Activated B cell treated with CpG ODN at 0.5 μM for 24 hours (primary cell): ENCODE measurements at regions of chr17 and their contacts with region 1.

Region 1: GRCh38 chr17:19338031-19338990 is 24.2 kb downstream of the B9D1 start:
- DNase-seq: peak; percentile 65
- ATAC-seq: peak; percentile 99
- H3K4me3 Mint-ChIP-seq: no peak overlapping the region
- H3K27ac Mint-ChIP-seq: no peak overlapping the region
- H3K4me1 Mint-ChIP-seq: no peaks in the 10 kb centered on the region
- H3K27me3 Mint-ChIP-seq: no peaks in the 10 kb centered on the region
- CTCF ChIP-seq: peak; percentile 28

Region 2: GRCh38 chr17:19284005-19284959 is 54.0 kb before region 1 on chr17:
- CTCF ChIA-PET with region 1: interaction called, 3 read pairs
- POLR2A ChIA-PET with region 1: no interaction called
- intact Hi-C with region 1: loop called (anchors 10 kb)
- DNase-seq: no peak
- ATAC-seq: peak; percentile 83
- H3K4me3 Mint-ChIP-seq: peak overlapping the region; percentile 39
- H3K27ac Mint-ChIP-seq: peak overlapping the region; percentile 37
- H3K4me1 Mint-ChIP-seq: peaks cover 27% of the 10 kb centered on the region
- H3K27me3 Mint-ChIP-seq: peaks cover 14% of the 10 kb centered on the region
- CTCF ChIP-seq: no peak

Region 3: GRCh38 chr17:19317359-19318095 is 20.8 kb before region 1 on chr17:
- CTCF ChIA-PET with region 1: interaction called, 3 read pairs
- POLR2A ChIA-PET with region 1: no interaction called
- intact Hi-C with region 1: loop called (anchors 1 kb)
- DNase-seq: no peak
- ATAC-seq: peak; percentile 96
- H3K4me3 Mint-ChIP-seq: no peak overlapping the region
- H3K27ac Mint-ChIP-seq: no peak overlapping the region
- H3K4me1 Mint-ChIP-seq: peaks cover 6% of the 10 kb centered on the region
- H3K27me3 Mint-ChIP-seq: peaks cover 2% of the 10 kb centered on the region
- CTCF ChIP-seq: no peak

Region 4: DNA sequence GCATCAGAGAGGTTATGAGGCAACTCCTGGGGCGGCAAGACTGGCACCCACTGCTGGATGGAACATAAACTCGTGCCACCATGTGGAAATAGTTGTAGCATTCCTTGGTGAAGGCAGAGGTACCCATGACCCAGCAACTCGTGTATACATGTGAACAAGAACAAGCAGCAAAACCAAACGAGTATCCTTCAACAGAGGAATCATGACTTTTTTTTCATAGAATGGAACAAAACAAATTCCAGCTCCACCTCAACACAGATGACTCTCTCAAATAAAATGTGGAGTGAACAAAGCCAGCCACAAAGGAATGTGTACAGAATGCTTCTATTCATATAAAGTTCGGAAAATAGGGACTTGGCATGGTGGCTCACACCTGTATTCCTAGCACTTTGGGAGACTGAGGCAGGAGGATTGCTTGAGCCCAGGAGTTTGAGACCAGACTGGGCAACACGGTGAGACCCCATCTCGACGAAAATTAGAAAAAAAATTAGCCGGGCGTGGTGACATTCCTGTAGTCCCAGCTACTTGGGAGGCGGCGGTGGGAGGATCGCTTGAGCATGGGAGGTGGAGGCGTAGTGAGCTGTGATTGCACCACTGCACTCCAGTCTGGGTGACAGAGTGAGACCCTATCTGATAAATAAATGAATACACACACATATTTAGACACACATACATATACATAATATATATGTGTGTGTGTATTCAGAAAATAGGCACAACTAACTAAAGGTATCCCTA is 11.1 kb before region 1 on chr17:
- CTCF ChIA-PET with region 1: interaction called, 11 read pairs
- POLR2A ChIA-PET with region 1: no interaction called
- intact Hi-C with region 1: no loop called
- DNase-seq: no peak
- ATAC-seq: no peak
- H3K4me3 Mint-ChIP-seq: no peak overlapping the region
- H3K27ac Mint-ChIP-seq: no peak overlapping the region
- H3K4me1 Mint-ChIP-seq: no peaks in the 10 kb centered on the region
- H3K27me3 Mint-ChIP-seq: no peaks in the 10 kb centered on the region
- CTCF ChIP-seq: no peak

Region 5: DNA sequence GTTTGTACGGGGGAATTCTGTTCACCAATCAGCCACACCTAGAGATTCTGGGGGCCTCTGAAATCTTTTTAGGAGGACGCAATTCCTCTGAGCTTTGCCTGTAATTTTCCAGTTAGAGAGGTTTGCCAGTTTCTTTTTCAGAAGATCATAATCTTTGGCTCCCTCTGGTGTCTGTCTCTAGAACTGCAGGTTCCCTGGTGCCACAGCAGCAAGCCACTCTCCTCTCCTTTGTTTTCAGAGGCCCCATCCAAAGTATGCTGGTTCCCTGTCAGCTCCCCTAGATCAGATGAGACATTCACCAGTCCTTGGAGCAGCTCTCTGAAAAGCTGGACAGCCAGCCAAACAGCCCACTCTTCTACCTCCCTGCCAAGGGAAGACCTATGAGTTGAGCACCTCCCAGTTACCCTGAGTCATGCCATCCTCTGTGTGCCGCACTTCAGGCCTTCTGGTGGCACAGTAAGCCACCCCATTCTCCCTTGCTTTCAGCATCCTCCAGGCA is 108.8 kb after region 1 on chr17:
- CTCF ChIA-PET with region 1: interaction called, 13 read pairs
- POLR2A ChIA-PET with region 1: no interaction called
- intact Hi-C with region 1: loop called (anchors 1 kb)
- DNase-seq: no peak
- ATAC-seq: peak; percentile 65
- H3K4me3 Mint-ChIP-seq: no peak overlapping the region
- H3K27ac Mint-ChIP-seq: no peak overlapping the region
- H3K4me1 Mint-ChIP-seq: peaks cover 5% of the 10 kb centered on the region
- H3K27me3 Mint-ChIP-seq: peaks cover 17% of the 10 kb centered on the region
- CTCF ChIP-seq: peak; percentile 63